MCF 10A (cell line): ENCODE measurements at regions of chr14 and their contacts with region 1.

Region 1: DNA sequence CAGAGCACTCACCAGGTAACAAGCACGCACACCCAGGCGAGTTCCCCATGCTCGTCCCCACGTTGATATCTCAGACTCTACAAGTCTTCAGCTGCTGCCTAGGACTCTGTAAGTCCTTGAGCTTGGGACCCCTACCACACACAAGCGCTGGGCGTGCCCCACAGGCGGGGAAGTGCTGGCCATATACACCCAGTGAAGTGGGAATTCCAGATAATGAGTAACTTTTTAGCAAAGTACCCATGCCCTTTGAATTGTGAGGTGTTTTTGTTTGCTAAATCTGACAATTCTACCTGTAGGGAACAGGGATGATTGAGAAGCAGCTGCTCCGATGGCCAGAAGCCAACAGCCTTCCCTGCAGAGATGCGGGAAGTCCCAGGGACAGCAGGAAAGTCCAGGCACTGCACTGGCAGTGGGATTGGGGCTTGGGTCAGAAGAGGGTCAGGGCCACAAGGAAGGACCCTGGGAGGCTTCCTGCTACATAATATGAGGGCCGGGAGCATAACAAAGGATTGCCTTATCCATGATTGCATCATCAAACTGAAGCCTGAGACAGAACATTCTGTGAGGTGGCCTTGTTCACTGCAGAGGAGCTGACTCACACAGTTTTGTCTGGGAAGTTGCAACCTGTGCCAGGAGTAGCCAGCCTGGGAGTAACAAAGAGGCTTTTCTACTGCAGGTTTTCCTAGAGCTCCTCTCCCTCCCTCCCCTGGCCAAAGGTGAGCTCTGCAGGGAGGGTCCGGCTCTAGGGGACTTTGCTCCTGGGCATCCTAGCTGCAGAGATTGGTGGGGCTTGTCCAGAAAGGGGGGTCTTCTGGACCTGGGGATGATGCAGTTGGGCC is 13.2 kb upstream of the SERPINA3 start:
- DNase-seq: peak; percentile 99
- H3K4me3 Mint-ChIP-seq: peak overlapping the region; percentile 17
- H3K27ac Mint-ChIP-seq: peak overlapping the region; percentile 90
- H3K4me1 Mint-ChIP-seq: peaks cover 43% of the 10 kb centered on the region
- H3K27me3 Mint-ChIP-seq: no peaks in the 10 kb centered on the region
- CTCF ChIP-seq: peak; percentile 33

Region 2: GRCh38 chr14:94392510-94392935 is 206.5 kb before region 1 on chr14:
- CTCF ChIA-PET with region 1: no interaction called
- POLR2A ChIA-PET with region 1: no interaction called
- intact Hi-C with region 1: no loop called
- DNase-seq: peak; percentile 94
- H3K4me3 Mint-ChIP-seq: no peak overlapping the region
- H3K27ac Mint-ChIP-seq: peak overlapping the region; percentile 42
- H3K4me1 Mint-ChIP-seq: peaks cover 53% of the 10 kb centered on the region
- H3K27me3 Mint-ChIP-seq: no peaks in the 10 kb centered on the region
- CTCF ChIP-seq: no peak

Region 3: DNA sequence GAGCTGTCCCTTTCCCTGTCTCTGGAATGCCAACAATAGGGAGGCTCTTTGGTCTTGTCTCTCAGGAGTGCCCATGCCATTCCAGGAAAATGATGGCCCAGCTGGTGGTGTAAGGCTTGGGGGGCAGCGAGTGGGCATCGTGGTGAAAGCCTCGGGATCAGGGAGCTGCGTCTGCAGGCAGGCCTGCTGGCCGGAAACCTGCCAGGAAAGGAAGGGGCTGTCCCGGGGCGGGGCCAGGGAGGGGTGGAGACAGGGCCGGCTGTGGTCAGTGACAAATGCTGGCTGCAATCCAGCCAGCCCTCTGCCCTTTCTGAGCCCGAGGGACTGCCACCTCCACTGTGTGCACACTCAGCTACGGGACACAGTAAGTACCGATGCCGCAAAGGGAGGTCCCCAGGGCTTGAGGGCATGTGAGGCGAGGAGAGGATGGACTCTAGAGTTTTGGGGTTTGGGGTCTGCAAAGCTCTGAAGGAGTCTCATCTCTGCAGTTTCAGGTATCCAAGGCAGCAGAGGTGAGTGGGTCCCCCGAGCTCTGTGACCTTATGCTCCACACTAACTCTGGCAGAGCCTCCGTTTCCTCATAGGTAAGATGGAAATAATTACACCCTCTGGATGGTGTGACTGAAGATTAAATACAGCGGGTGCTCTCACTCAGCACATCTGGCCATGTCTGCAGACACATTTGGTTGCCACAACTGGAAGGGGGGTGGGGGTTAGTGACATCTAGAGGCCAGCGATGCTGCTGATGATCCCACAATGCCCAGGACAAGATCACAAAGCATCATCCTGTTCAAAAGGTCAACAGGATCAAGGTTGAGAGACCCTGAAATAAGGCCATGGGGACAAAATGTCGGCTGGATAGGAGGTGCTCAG is 17.7 kb before region 1 on chr14 and contains the start of gene SERPINA5:
- CTCF ChIA-PET with region 1: interaction called, 3 read pairs
- POLR2A ChIA-PET with region 1: interaction called, 12 read pairs
- intact Hi-C with region 1: no loop called
- DNase-seq: peak; percentile 73
- H3K4me3 Mint-ChIP-seq: no peak within 1 kb of the TSS
- H3K27ac Mint-ChIP-seq: no peak within 1 kb of the TSS
- H3K4me1 Mint-ChIP-seq: peaks cover 8% of the 10 kb centered on the region
- H3K27me3 Mint-ChIP-seq: no peaks in the 10 kb centered on the region
- CTCF ChIP-seq: no peak
- total RNA-seq, gene SERPINA5: 0.35 TPM in 1 of 2 replicates, not detected in the other

Region 4: GRCh38 chr14:94612174-94612573 is 13.1 kb after region 1 on chr14 and contains the start of gene SERPINA3:
- CTCF ChIA-PET with region 1: interaction called, 3 read pairs
- POLR2A ChIA-PET with region 1: interaction called, 140 read pairs
- intact Hi-C with region 1: no loop called
- DNase-seq: peak; percentile 65
- H3K4me3 Mint-ChIP-seq: peak within 1 kb of the TSS; percentile 59
- H3K27ac Mint-ChIP-seq: peak within 1 kb of the TSS; percentile 88
- H3K4me1 Mint-ChIP-seq: peaks cover 12% of the 10 kb centered on the region
- H3K27me3 Mint-ChIP-seq: no peaks in the 10 kb centered on the region
- CTCF ChIP-seq: no peak
- total RNA-seq, gene SERPINA3: 44.5 and 54.5 TPM in 2 replicates

Region 5: GRCh38 chr14:95026851-95027473 is 427.9 kb after region 1 on chr14:
- CTCF ChIA-PET with region 1: no interaction called
- POLR2A ChIA-PET with region 1: no interaction called
- intact Hi-C with region 1: no loop called
- DNase-seq: no peak
- H3K4me3 Mint-ChIP-seq: no peak overlapping the region
- H3K27ac Mint-ChIP-seq: no peak overlapping the region
- H3K4me1 Mint-ChIP-seq: peaks cover 12% of the 10 kb centered on the region
- H3K27me3 Mint-ChIP-seq: no peaks in the 10 kb centered on the region
- CTCF ChIP-seq: no peak